ENCODE measurements at regions of chr2 and their contacts with region 1.

Region 1: DNA sequence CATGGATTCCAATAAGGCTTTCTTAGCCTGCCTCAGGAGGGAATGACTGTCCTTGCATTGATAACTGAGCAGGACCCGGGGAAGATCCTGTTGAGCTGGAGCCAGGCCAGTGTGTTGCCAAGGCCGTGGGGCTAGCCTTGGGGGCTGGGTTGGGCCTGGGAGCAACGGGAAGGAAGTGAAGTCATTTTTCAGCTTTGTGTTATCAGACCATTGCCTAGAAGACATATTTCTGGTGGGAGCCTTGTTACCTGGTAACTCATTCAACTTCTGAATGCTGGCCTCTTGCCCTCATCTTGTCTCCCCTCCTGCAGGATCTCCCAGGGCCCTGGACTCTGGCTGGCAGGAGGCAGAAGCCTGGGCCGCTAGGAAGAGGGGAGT is 92.7 kb upstream of the MGAT5 start:
- DNase-seq: no peak
- ATAC-seq: no peak
- H3K4me3 ChIP-seq: no peak overlapping the region
- H3K4me3 Mint-ChIP-seq: no peak overlapping the region
- H3K27ac ChIP-seq: no peak overlapping the region
- H3K27ac Mint-ChIP-seq: peak overlapping the region; percentile 3
- H3K4me1 ChIP-seq: peaks cover 65% of the 10 kb centered on the region
- H3K4me1 Mint-ChIP-seq: peaks cover 96% of the 10 kb centered on the region
- H3K27me3 ChIP-seq: no peaks in the 10 kb centered on the region
- H3K27me3 Mint-ChIP-seq: no peaks in the 10 kb centered on the region
- CTCF ChIP-seq: no peak

Region 2: DNA sequence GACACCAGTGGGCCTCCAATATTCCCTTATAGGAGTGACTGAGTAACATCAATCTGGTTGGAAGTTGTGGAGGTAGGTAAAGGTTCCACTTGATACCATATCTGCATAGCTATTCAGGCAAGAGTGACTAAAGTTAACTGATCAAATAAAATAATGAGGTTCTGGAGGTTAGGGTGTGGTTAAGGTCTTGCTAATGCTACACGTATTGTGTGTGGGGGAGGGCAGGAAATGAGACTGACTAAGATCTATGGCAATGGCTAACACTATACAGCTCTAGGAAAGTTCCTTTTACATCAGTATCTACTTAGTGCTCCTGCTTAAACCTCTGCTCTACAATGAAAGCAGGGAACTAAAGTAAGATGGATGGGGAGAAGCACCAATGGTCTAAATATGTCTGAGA is 56.4 kb before region 1 on chr2:
- CTCF ChIA-PET with region 1: no interaction called
- POLR2A ChIA-PET with region 1: no interaction called
- intact Hi-C with region 1: no loop called
- DNase-seq: peak in 5 of 14 experiments; percentile 9 to 47 (median 28)
- ATAC-seq: peak; percentile 76
- H3K4me3 ChIP-seq: no peak overlapping the region
- H3K4me3 Mint-ChIP-seq: no peak overlapping the region
- H3K27ac ChIP-seq: no peak overlapping the region
- H3K27ac Mint-ChIP-seq: no peak overlapping the region
- H3K4me1 ChIP-seq: peaks cover 4% of the 10 kb centered on the region
- H3K4me1 Mint-ChIP-seq: peaks cover 10% of the 10 kb centered on the region
- H3K27me3 ChIP-seq: no peaks in the 10 kb centered on the region
- H3K27me3 Mint-ChIP-seq: no peaks in the 10 kb centered on the region
- CTCF ChIP-seq: no peak

Region 3: DNA sequence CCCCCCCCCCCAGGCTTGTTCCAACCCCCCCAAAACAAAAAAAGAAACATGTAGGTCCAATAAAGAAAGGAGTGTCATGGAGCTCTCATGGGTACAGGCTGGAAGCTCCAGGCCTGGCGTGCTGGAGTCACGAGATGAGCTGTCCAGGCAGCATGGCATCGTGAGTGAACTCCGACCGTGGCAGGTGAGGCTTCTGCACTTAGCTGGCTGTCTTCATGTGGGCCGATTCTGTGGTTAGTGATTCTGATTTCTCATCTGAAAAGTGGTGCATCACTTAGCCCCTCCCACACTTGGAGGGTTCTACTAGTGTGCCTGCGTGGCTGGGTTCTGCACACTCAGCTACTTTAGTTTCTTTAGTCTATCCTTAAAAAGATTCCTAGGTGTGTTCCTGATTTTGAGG is 33.7 kb before region 1 on chr2:
- CTCF ChIA-PET with region 1: interaction called, 3 read pairs
- POLR2A ChIA-PET with region 1: interaction called, 3 read pairs
- intact Hi-C with region 1: loop called in 1 of 2 experiments (anchors 5 kb)
- DNase-seq: peak in 13 of 14 experiments; percentile 21 to 76 (median 46)
- ATAC-seq: peak; percentile 73
- H3K4me3 ChIP-seq: no peak overlapping the region
- H3K4me3 Mint-ChIP-seq: peak overlapping the region; percentile 13
- H3K27ac ChIP-seq: no peak overlapping the region
- H3K27ac Mint-ChIP-seq: peak overlapping the region; percentile 69
- H3K4me1 ChIP-seq: peaks cover 71% of the 10 kb centered on the region
- H3K4me1 Mint-ChIP-seq: peaks cover 92% of the 10 kb centered on the region
- H3K27me3 ChIP-seq: no peaks in the 10 kb centered on the region
- H3K27me3 Mint-ChIP-seq: no peaks in the 10 kb centered on the region
- CTCF ChIP-seq: no peak